ENCODE measurements at regions of chr9 and their contacts with region 1.

Region 1: GRCh38 chr9:34989003-34989945 is at the start of gene DNAJB5:
- DNase-seq: peak; percentile 98
- ATAC-seq: peak; percentile 96
- H3K4me3 Mint-ChIP-seq: peak within 1 kb of the TSS; percentile 92
- H3K27ac Mint-ChIP-seq: peak within 1 kb of the TSS; percentile 93
- H3K4me1 Mint-ChIP-seq: peaks cover 61% of the 10 kb centered on the region
- H3K27me3 Mint-ChIP-seq: no peaks in the 10 kb centered on the region
- total RNA-seq, gene DNAJB5: 5.1 to 5.5 TPM

Region 2: GRCh38 chr9:34961574-34962490 is 27.4 kb before region 1 on chr9:
- CTCF ChIA-PET with region 1: interaction called, 12 read pairs
- POLR2A ChIA-PET with region 1: no interaction called
- DNase-seq: no peak
- ATAC-seq: no peak
- H3K4me3 Mint-ChIP-seq: no peak overlapping the region
- H3K27ac Mint-ChIP-seq: no peak overlapping the region
- H3K4me1 Mint-ChIP-seq: peaks cover 1% of the 10 kb centered on the region
- H3K27me3 Mint-ChIP-seq: peaks cover 56% of the 10 kb centered on the region

Region 3: GRCh38 chr9:35001803-35002502 is 12.7 kb after region 1 on chr9:
- CTCF ChIA-PET with region 1: interaction called, 11 read pairs
- POLR2A ChIA-PET with region 1: interaction called, 3 read pairs
- DNase-seq: no peak
- ATAC-seq: no peak
- H3K4me3 Mint-ChIP-seq: no peak overlapping the region
- H3K27ac Mint-ChIP-seq: no peak overlapping the region
- H3K4me1 Mint-ChIP-seq: peaks cover 10% of the 10 kb centered on the region
- H3K27me3 Mint-ChIP-seq: no peaks in the 10 kb centered on the region

Region 4: GRCh38 chr9:35026671-35027070 is 37.4 kb after region 1 on chr9:
- CTCF ChIA-PET with region 1: interaction called, 10 read pairs
- POLR2A ChIA-PET with region 1: no interaction called
- DNase-seq: no peak
- ATAC-seq: no peak
- H3K4me3 Mint-ChIP-seq: no peak overlapping the region
- H3K27ac Mint-ChIP-seq: no peak overlapping the region
- H3K4me1 Mint-ChIP-seq: peaks cover 20% of the 10 kb centered on the region
- H3K27me3 Mint-ChIP-seq: no peaks in the 10 kb centered on the region